ENCODE measurements at regions of chr9 and their contacts with region 1.

Region 1: GRCh38 chr9:36166101-36166927 is 2.9 kb upstream of the CCIN start:
- DNase-seq: peak; percentile 77 to 90 (median 87)
- H3K4me3 ChIP-seq: peak overlapping the region in 2 of 3 donors; percentile 20 to 40
- H3K27ac ChIP-seq: no peak overlapping the region
- H3K4me1 ChIP-seq: peaks cover 0 to 2% (median 2%) of the 10 kb centered on the region in 3 donors
- H3K27me3 ChIP-seq: no peaks in the 10 kb centered on the region
- CTCF ChIP-seq: peak; percentile 84

Region 2: DNA sequence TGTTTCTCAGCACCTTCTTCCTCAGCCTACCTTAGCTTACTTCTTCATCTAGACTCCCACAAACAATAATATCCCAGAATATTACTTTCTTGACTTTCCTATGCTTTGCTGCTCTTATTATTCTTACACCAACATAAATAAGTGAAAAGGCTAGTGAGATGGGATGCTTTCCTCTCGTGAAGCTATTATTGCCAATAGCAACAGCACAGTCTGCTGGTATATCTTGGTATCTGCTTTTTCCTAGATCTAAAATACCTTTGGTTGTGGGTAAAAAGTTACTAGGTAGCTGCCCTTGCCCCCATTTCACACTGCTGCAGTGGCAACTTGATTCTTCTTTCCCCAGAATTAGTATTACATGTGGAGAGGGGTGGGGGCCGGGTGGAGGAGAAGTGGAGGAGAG is 55.9 kb before region 1 on chr9:
- intact Hi-C with region 1: loop called (anchors 10 kb)
- DNase-seq: no peak
- H3K4me3 ChIP-seq: no peak overlapping the region
- H3K27ac ChIP-seq: no peak overlapping the region
- H3K4me1 ChIP-seq: no peaks in the 10 kb centered on the region
- H3K27me3 ChIP-seq: no peaks in the 10 kb centered on the region
- CTCF ChIP-seq: no peak

Region 3: GRCh38 chr9:36204906-36205547 is 38.7 kb after region 1 on chr9:
- intact Hi-C with region 1: no loop called
- DNase-seq: no peak
- H3K4me3 ChIP-seq: no peak overlapping the region
- H3K27ac ChIP-seq: no peak overlapping the region
- H3K4me1 ChIP-seq: peaks cover 0 to 16% (median 13%) of the 10 kb centered on the region in 3 donors
- H3K27me3 ChIP-seq: no peaks in the 10 kb centered on the region
- CTCF ChIP-seq: peak; percentile 22

Measured in kidney (tissue), 22 donors.